AG04449 (cell line): ENCODE measurements at regions of chr19 and their contacts with region 1.

Region 1: GRCh38 chr19:48391107-48391986 is at the start of gene KDELR1:
- DNase-seq: no peak
- H3K4me3 ChIP-seq: peak within 1 kb of the TSS; percentile 98
- CTCF ChIP-seq: peak; percentile 95

Region 2: GRCh38 chr19:48333467-48334384 is 57.6 kb before region 1 on chr19:
- CTCF ChIA-PET with region 1: interaction called, 17 read pairs
- POLR2A ChIA-PET with region 1: no interaction called
- DNase-seq: no peak
- H3K4me3 ChIP-seq: peak overlapping the region; percentile 58
- CTCF ChIP-seq: peak; percentile 96

Region 3: DNA sequence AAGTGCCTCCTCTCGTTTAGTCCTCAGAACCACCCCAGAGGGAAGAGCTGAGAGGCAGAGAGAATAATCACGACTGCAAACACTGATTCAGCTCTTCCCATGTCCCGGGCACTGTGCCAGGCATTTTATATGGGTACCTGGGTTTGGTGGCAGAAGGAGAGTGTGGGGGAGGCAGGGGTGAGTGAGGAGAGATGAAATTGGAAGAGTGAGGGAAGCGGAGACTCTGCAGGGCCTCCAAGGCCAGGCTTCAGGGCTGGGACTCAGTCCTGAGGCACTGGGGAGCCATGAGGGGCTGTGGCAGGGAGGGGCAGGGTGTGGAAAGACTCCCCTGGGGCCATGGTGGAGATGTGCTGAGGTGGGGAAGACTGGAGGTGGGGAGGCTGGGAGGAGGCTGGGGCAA is 18.4 kb before region 1 on chr19:
- CTCF ChIA-PET with region 1: interaction called, 11 read pairs
- POLR2A ChIA-PET with region 1: interaction called, 3 read pairs
- DNase-seq: no peak
- H3K4me3 ChIP-seq: no peak overlapping the region
- CTCF ChIP-seq: no peak

Region 4: GRCh38 chr19:48413879-48414587 is 22.7 kb after region 1 on chr19:
- CTCF ChIA-PET with region 1: interaction called, 11 read pairs
- POLR2A ChIA-PET with region 1: no interaction called
- DNase-seq: no peak
- H3K4me3 ChIP-seq: no peak overlapping the region
- CTCF ChIP-seq: no peak

Region 5: DNA sequence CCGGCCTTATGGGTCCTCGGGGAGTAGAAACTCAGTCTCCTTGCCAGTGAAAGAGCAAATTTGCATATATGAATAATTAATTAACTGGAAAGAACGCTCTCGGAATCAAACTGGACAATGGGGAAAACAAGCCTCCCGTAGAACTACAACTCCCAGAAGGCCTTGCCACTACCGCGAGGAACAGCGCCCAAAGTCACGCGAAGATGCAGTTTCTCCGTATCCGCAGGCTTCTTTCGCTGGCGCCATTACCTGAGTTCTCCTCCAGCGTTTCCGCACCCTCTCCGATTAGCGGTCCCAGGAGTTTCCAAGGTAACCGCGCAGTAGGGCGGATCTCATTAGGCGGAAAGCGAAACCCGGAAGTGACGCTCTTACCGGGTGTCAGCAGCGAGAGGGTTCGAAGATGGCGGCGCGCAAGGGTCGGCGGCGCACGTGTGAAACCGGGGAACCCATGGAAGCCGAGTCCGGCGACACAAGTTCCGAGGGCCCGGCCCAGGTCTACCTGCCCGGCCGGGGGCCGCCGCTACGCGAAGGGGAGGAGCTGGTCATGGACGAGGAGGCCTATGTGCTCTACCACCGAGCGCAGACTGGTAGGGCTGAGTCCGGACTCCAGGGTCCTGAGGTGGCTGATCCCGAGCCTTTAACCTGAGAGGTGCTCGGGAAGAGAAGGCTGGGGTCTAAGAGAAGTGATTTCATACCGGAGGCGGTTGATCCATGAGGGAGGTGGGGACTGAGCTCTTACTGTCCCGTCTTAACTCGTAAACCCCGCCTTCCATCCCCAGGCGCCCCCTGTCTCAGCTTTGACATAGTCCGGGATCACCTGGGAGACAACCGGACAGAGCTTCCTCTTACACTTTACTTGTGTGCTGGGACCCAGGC is 54.5 kb after region 1 on chr19 and contains the start of gene GRWD1:
- CTCF ChIA-PET with region 1: interaction called, 20 read pairs
- POLR2A ChIA-PET with region 1: interaction called, 6 read pairs
- DNase-seq: peak; percentile 63
- H3K4me3 ChIP-seq: peak within 1 kb of the TSS; percentile 90
- CTCF ChIP-seq: no peak